Activated naive CD4-positive, alpha-beta T cell treated with anti-CD3 and anti-CD28 coated beads, Interleukin-2, amount 10 ng/mL, durations not matched to agents 7 days and 5 days (primary cell): ENCODE measurements at regions of chr17 and their contacts with region 1.

Region 1: DNA sequence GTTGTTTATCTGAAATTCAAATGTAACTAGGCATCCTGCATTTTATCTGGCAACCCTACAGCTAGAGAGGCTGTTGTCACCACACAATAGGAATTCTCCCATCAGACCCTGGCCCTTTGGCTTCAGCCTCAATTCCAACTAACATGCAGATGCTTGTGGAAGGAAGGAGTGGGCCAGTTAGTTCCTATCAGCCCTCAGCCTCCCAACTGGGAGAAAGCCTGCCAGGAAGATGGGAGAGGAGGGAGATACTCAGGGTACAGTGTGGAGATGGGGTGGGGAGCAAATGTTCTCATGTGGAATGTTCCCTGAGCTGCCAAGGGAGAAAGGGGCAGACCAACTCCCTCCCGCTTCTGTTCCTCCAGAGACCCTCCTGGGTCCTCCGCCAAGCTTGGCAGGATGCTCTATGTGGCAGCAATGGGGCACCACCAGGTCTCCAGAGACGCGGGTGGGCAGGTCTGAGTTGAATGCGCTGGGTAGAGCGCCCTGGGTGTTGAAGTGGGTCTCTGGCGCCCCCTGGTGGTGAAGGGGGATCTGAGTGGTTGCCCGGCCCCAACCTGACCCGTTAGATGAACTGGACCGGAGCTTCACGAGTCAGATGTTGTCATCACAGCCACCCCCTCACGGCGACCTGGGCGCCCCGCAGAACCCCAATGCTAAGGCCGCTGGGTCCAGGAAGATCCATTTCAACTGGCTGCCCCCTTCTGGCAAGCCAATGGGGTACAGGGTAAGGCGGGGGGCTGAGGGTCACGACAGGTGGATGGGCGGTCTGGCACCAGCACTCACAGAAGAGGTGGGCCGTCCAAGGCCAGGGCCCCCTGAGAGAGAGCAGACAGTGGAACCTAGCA is 15.2 kb downstream of the GALK1 start:
- DNase-seq: peak; percentile 92
- H3K4me3 Mint-ChIP-seq: no peak overlapping the region
- H3K27ac Mint-ChIP-seq: no peak overlapping the region
- H3K4me1 Mint-ChIP-seq: peaks cover 20% of the 10 kb centered on the region
- H3K27me3 Mint-ChIP-seq: peaks cover 33% of the 10 kb centered on the region

Region 2: DNA sequence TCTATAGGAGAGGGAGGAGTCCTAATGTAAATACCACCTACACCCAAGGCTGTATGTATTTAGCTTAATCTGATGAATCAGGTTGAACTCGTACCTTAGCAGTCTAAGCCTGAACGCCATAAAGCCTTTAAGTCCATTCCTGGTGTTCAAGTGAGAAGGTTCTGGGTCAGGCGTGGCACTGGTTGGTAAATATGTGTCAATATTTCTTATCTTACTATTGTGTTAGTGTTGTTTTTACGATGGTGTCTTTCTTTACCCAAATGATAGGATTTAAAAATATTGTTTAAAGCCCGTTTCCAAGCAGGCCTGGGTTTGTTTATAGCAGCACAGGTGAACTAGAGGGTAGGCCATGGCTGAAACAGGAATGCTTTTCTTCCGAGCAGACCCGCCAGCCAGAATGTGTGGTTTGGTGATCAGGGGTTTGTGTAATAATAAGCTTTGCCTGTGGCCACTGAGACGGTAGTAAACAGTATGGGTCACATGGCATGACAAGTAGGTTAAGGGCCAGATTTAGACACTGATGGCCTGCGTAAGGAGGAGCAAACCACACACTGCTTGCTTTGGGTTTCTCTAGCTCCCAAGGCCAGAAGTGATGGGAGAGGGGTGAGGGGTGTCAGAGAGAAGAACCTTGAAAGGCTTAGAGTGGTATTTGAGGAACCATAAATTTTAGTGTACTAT is 290.0 kb before region 1 on chr17:
- CTCF ChIA-PET with region 1: no interaction called
- DNase-seq: no peak
- H3K4me3 Mint-ChIP-seq: no peak overlapping the region
- H3K27ac Mint-ChIP-seq: no peak overlapping the region
- H3K4me1 Mint-ChIP-seq: peaks cover 31% of the 10 kb centered on the region
- H3K27me3 Mint-ChIP-seq: no peaks in the 10 kb centered on the region

Region 3: GRCh38 chr17:75619506-75620431 is 130.0 kb before region 1 on chr17:
- CTCF ChIA-PET with region 1: interaction called, 380 read pairs
- DNase-seq: peak; percentile 55
- H3K4me3 Mint-ChIP-seq: no peak overlapping the region
- H3K27ac Mint-ChIP-seq: no peak overlapping the region
- H3K4me1 Mint-ChIP-seq: no peaks in the 10 kb centered on the region
- H3K27me3 Mint-ChIP-seq: no peaks in the 10 kb centered on the region

Region 4: GRCh38 chr17:75645889-75646637 is 103.7 kb before region 1 on chr17:
- CTCF ChIA-PET with region 1: interaction called, 27 read pairs
- DNase-seq: peak; percentile 39
- H3K4me3 Mint-ChIP-seq: no peak overlapping the region
- H3K27ac Mint-ChIP-seq: peak overlapping the region; percentile 9
- H3K4me1 Mint-ChIP-seq: peaks cover 15% of the 10 kb centered on the region
- H3K27me3 Mint-ChIP-seq: no peaks in the 10 kb centered on the region

Region 5: GRCh38 chr17:75679706-75680442 is 69.9 kb before region 1 on chr17:
- CTCF ChIA-PET with region 1: interaction called, 209 read pairs
- DNase-seq: no peak
- H3K4me3 Mint-ChIP-seq: no peak overlapping the region
- H3K27ac Mint-ChIP-seq: no peak overlapping the region
- H3K4me1 Mint-ChIP-seq: peaks cover 2% of the 10 kb centered on the region
- H3K27me3 Mint-ChIP-seq: no peaks in the 10 kb centered on the region

Region 6: GRCh38 chr17:75738218-75738802 is 11.5 kb before region 1 on chr17:
- CTCF ChIA-PET with region 1: interaction called, 40 read pairs
- DNase-seq: peak; percentile 48
- H3K4me3 Mint-ChIP-seq: no peak overlapping the region
- H3K27ac Mint-ChIP-seq: peak overlapping the region; percentile 39
- H3K4me1 Mint-ChIP-seq: peaks cover 9% of the 10 kb centered on the region
- H3K27me3 Mint-ChIP-seq: peaks cover 6% of the 10 kb centered on the region

Region 7: GRCh38 chr17:75827252-75828115 is 77.7 kb after region 1 on chr17:
- CTCF ChIA-PET with region 1: interaction called, 16 read pairs
- DNase-seq: peak; percentile 77
- H3K4me3 Mint-ChIP-seq: peak overlapping the region; percentile 18
- H3K27ac Mint-ChIP-seq: peak overlapping the region; percentile 90
- H3K4me1 Mint-ChIP-seq: peaks cover 29% of the 10 kb centered on the region
- H3K27me3 Mint-ChIP-seq: no peaks in the 10 kb centered on the region